GM12878 (cell line): ENCODE measurements at regions of chr22 and their contacts with region 1.

Region 1: DNA sequence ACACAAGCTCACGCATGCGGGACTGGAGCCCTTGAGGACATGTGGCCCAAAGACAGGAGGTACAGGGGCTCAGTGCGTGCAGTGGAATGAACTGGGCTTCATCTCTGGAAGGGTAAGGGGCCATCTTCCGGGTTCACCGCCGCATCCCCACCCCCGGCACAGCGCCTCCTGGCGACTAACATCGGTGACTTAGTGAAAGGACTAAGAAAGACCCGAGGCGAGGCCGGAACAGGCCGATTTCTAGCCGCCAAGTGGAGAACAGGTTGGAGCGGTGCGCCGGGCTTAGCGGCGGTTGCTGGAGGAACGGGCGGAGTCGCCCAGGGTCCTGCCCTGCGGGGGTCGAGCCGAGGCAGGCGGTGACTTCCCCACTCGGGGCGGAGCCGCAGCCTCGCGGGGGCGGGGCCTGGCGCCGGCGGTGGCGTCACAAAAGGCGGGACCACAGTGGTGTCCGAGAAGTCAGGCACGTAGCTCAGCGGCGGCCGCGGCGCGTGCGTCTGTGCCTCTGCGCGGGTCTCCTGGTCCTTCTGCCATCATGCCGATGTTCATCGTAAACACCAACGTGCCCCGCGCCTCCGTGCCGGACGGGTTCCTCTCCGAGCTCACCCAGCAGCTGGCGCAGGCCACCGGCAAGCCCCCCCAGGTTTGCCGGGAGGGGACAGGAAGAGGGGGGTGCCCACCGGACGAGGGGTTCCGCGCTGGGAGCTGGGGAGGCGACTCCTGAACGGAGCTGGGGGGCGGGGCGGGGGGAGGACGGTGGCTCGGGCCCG is at the start of gene MIF:
- DNase-seq: peak; percentile 82
- ATAC-seq: peak; percentile 89
- H3K4me3 ChIP-seq: peak within 1 kb of the TSS; percentile 98
- H3K27ac ChIP-seq: peak within 1 kb of the TSS; percentile 92
- H3K4me1 ChIP-seq: peaks cover 12% of the 10 kb centered on the region
- H3K27me3 ChIP-seq: no peaks in the 10 kb centered on the region
- CTCF ChIP-seq: peak; percentile 61 to 94 (median 80)
- EP300 ChIP-seq: peak in 1 of 2 experiments; percentile 13; a peak in 1 of 4 replicates
- POLR2A ChIP-seq: peak; percentile 89
- RAD21 ChIP-seq: peak; percentile 31; the same call in 1 of the 2 replicates
- polyA plus RNA-seq, gene MIF: 188 to 220 TPM

Region 2: GRCh38 chr22:23857606-23858483 is 36.3 kb before region 1 on chr22 and contains the start of gene SLC2A11:
- CTCF ChIA-PET with region 1: interaction called, 45 read pairs
- POLR2A ChIA-PET with region 1: interaction called, 41 read pairs
- RAD21 ChIA-PET with region 1: interaction called, 30 read pairs
- SMC1A ChIA-PET with region 1: interaction called, 18 read pairs
- in situ Hi-C with region 1: no loop called
- intact Hi-C with region 1: loop called (anchors 1 kb)
- DNase-seq: peak; percentile 96
- ATAC-seq: peak; percentile 97
- H3K4me3 ChIP-seq: peak within 1 kb of the TSS; percentile 89
- H3K27ac ChIP-seq: peak within 1 kb of the TSS; percentile 91
- H3K4me1 ChIP-seq: peaks cover 11% of the 10 kb centered on the region
- H3K27me3 ChIP-seq: no peaks in the 10 kb centered on the region
- CTCF ChIP-seq: peak; percentile 17 to 39 (median 26); a peak in 2 of 6 replicates
- EP300 ChIP-seq: no peak
- POLR2A ChIP-seq: peak; percentile 96
- RAD21 ChIP-seq: no peak
- polyA plus RNA-seq, gene SLC2A11: 0.98 to 2.9 TPM

Region 3: GRCh38 chr22:23878219-23878618 is 15.9 kb before region 1 on chr22:
- CTCF ChIA-PET with region 1: interaction called, 21 read pairs
- POLR2A ChIA-PET with region 1: no interaction called
- RAD21 ChIA-PET with region 1: interaction called, 4 read pairs
- SMC1A ChIA-PET with region 1: interaction called, 5 read pairs
- in situ Hi-C with region 1: no loop called
- intact Hi-C with region 1: no loop called
- DNase-seq: no peak
- ATAC-seq: no peak
- H3K4me3 ChIP-seq: no peak overlapping the region
- H3K27ac ChIP-seq: no peak overlapping the region
- H3K4me1 ChIP-seq: no peaks in the 10 kb centered on the region
- H3K27me3 ChIP-seq: no peaks in the 10 kb centered on the region
- CTCF ChIP-seq: no peak
- EP300 ChIP-seq: no peak
- POLR2A ChIP-seq: no peak
- RAD21 ChIP-seq: no peak

Region 4: DNA sequence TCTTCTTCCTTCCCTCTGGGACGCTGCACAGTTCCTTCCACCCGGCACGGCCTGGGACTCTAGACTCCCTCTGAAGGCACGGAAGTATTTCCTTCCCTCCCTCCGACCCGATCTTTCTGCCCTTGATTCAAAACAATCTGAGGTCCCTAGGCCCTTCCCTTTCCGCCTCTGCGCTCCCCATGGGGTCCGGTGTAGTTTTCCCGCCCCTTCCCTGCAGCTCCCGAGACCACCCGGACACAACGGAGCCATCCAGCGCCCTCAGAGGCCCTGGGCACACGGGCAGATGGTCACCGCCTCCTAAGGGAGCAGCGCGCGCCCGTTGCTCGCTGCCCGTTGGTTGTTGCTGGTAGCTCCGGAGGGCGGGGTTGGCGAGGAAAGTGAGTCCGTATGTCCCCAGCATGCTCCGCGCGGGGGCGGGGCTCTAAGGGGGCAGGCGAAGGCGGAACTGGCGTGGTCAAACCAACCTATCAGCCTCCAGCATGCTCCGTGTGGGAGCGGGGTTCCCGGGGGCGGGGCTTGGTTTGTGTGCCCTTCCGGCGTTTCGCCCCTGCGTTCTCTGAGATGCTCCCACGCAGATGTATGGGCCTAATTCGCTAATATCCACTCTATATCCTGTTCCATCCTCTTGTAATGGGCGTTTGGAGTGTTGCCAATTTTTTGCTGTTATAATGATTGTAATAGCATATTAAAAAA is 19.7 kb after region 1 on chr22:
- CTCF ChIA-PET with region 1: interaction called, 37 read pairs
- POLR2A ChIA-PET with region 1: interaction called, 29 read pairs
- RAD21 ChIA-PET with region 1: interaction called, 16 read pairs
- SMC1A ChIA-PET with region 1: interaction called, 14 read pairs
- in situ Hi-C with region 1: no loop called
- intact Hi-C with region 1: no loop called
- DNase-seq: peak; percentile 94
- ATAC-seq: peak; percentile 99
- H3K4me3 ChIP-seq: peak overlapping the region; percentile 73
- H3K27ac ChIP-seq: peak overlapping the region; percentile 99
- H3K4me1 ChIP-seq: peaks cover 2% of the 10 kb centered on the region; the same call in 1 of the 2 replicates
- H3K27me3 ChIP-seq: no peaks in the 10 kb centered on the region
- CTCF ChIP-seq: no peak
- EP300 ChIP-seq: no peak
- POLR2A ChIP-seq: peak; percentile 99
- RAD21 ChIP-seq: no peak